WTC11 (cell line): ENCODE measurements at regions of chr2 and their contacts with region 1.

Region 1: GRCh38 chr2:102235491-102235890 is 48.7 kb downstream of the IL1RL2 start:
- DNase-seq: peak; percentile 51
- ATAC-seq: peak; percentile 73
- H3K4me3 Mint-ChIP-seq: no peak overlapping the region
- H3K27ac Mint-ChIP-seq: no peak overlapping the region
- H3K4me1 Mint-ChIP-seq: peaks cover 7% of the 10 kb centered on the region
- H3K27me3 Mint-ChIP-seq: no peaks in the 10 kb centered on the region
- CTCF ChIP-seq: no peak

Region 2: DNA sequence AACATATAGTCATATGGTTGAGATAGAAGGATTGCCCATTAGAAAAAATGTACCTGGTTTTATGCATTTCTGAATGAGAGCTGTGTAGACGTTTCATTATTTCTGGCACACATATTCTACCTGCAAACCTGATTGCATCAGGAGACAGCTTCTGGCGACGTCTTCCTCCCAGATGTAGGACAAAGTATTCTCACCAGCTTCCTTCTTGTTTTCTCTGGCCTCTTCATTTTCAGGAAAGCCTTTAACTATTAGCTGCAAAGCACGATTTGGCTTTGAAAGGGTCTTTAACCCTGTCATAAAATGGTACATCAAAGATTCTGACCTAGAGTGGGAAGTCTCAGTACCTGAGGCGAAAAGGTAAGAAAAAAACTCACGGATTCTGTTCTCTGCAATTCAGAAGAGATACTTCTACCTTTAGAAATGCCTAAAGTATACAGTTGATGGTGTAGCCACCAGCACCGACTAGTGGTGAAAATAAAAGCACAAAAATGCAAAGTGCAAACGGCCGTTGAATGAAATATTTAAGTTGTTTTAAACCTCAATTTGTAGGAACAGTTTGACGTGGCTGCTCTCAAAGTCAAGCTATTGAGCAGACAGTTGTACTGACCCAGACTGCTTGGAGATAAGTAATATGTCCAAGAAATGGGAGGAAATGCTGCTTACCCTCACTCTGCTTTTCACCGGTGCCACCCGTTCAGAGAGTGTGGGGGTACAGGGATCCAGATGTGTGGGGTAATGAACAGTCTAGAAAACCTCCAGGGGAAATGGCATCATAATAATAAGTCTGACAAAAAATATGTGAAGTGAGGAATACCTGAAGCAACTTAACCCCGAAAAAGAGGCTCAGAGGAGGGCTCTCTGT is 207.7 kb after region 1 on chr2:
- CTCF ChIA-PET with region 1: interaction called, 23 read pairs
- POLR2A ChIA-PET with region 1: no interaction called
- DNase-seq: peak; percentile 15
- ATAC-seq: peak; percentile 72
- H3K4me3 Mint-ChIP-seq: no peak overlapping the region
- H3K27ac Mint-ChIP-seq: no peak overlapping the region
- H3K4me1 Mint-ChIP-seq: no peaks in the 10 kb centered on the region
- H3K27me3 Mint-ChIP-seq: no peaks in the 10 kb centered on the region
- CTCF ChIP-seq: 0 out of 2 replicates have a peak, but pooled peaks have one; percentile 22

Region 3: DNA sequence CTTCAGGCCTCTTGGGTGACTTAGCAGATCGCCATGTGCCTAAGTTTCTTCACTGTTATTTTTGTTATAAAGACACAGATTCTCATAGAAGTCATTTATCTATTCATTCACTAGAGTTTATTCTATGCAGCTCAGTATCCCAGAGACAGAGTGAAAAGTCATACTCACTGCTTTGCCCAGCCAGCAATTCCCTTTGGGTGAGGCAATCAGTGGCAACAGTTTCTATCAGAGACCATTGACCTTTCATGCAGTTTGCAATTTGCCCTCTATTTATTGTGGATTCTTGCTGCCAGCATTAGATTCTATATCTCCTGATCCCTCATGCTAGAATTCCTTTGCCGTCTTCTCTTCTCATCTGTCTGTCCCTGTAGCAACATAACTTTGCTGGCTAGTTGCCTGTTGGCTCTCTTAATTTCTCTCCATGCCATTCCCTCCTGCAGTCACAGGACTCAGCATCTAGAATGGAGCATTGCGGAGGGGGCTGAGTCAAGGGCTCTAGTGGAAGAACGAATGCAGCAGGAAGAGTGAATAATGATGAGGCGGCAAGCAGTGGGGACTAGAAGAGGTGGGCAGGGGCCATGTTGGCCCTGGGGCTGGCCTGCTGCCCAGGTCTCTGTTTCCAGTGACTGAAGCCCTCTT is 249.8 kb after region 1 on chr2:
- CTCF ChIA-PET with region 1: no interaction called
- POLR2A ChIA-PET with region 1: no interaction called
- DNase-seq: no peak
- ATAC-seq: no peak
- H3K4me3 Mint-ChIP-seq: no peak overlapping the region
- H3K27ac Mint-ChIP-seq: no peak overlapping the region; the same call in 1 of the 2 replicates
- H3K4me1 Mint-ChIP-seq: peaks cover 34% of the 10 kb centered on the region
- H3K27me3 Mint-ChIP-seq: no peaks in the 10 kb centered on the region
- CTCF ChIP-seq: no peak